Activated B cell treated with CpG ODN at 0.5 μM for 24 hours (primary cell): ENCODE measurements at regions of chrX and their contacts with region 1.

Region 1: GRCh38 chrX:50691820-50692219 is 122.2 kb downstream of the SHROOM4 start:
- DNase-seq: no peak
- ATAC-seq: peak; percentile 50
- H3K4me3 Mint-ChIP-seq: no peak overlapping the region
- H3K27ac Mint-ChIP-seq: no peak overlapping the region
- H3K4me1 Mint-ChIP-seq: no peaks in the 10 kb centered on the region
- H3K27me3 Mint-ChIP-seq: no peaks in the 10 kb centered on the region
- CTCF ChIP-seq: no peak

Region 2: GRCh38 chrX:50905334-50905733 is 213.5 kb after region 1 on chrX:
- CTCF ChIA-PET with region 1: no interaction called
- POLR2A ChIA-PET with region 1: no interaction called
- intact Hi-C with region 1: loop called (anchors 1 kb)
- DNase-seq: no peak
- ATAC-seq: no peak
- H3K4me3 Mint-ChIP-seq: no peak overlapping the region
- H3K27ac Mint-ChIP-seq: no peak overlapping the region
- H3K4me1 Mint-ChIP-seq: no peaks in the 10 kb centered on the region
- H3K27me3 Mint-ChIP-seq: no peaks in the 10 kb centered on the region
- CTCF ChIP-seq: no peak

Region 3: GRCh38 chrX:50988649-50989048 is 296.8 kb after region 1 on chrX:
- CTCF ChIA-PET with region 1: no interaction called
- POLR2A ChIA-PET with region 1: no interaction called
- intact Hi-C with region 1: loop called (anchors 2 kb)
- DNase-seq: no peak
- ATAC-seq: no peak
- H3K4me3 Mint-ChIP-seq: no peak overlapping the region
- H3K27ac Mint-ChIP-seq: no peak overlapping the region
- H3K4me1 Mint-ChIP-seq: no peaks in the 10 kb centered on the region
- H3K27me3 Mint-ChIP-seq: no peaks in the 10 kb centered on the region
- CTCF ChIP-seq: no peak